ENCODE measurements at regions of chr16 and their contacts with region 1.

Region 1: GRCh38 chr16:69787883-69788282 is 25.8 kb downstream of the WWP2 start:
- DNase-seq: no peak
- ATAC-seq: no peak
- H3K4me3 ChIP-seq: no peak overlapping the region
- H3K27ac ChIP-seq: no peak overlapping the region
- H3K4me1 ChIP-seq: no peaks in the 10 kb centered on the region
- H3K27me3 ChIP-seq: no peaks in the 10 kb centered on the region
- CTCF ChIP-seq: no peak
- EP300 ChIP-seq: no peak
- POLR2A ChIP-seq: no peak
- RAD21 ChIP-seq: no peak

Region 2: GRCh38 chr16:69660166-69660565 is 127.7 kb before region 1 on chr16:
- CTCF ChIA-PET with region 1: no interaction called
- POLR2A ChIA-PET with region 1: no interaction called
- in situ Hi-C with region 1: no loop called
- intact Hi-C with region 1: no loop called
- DNase-seq: no peak
- ATAC-seq: no peak
- H3K4me3 ChIP-seq: no peak overlapping the region
- H3K27ac ChIP-seq: no peak overlapping the region
- H3K4me1 ChIP-seq: no peaks in the 10 kb centered on the region
- H3K27me3 ChIP-seq: no peaks in the 10 kb centered on the region
- CTCF ChIP-seq: no peak
- EP300 ChIP-seq: no peak
- POLR2A ChIP-seq: no peak
- RAD21 ChIP-seq: no peak

Region 3: DNA sequence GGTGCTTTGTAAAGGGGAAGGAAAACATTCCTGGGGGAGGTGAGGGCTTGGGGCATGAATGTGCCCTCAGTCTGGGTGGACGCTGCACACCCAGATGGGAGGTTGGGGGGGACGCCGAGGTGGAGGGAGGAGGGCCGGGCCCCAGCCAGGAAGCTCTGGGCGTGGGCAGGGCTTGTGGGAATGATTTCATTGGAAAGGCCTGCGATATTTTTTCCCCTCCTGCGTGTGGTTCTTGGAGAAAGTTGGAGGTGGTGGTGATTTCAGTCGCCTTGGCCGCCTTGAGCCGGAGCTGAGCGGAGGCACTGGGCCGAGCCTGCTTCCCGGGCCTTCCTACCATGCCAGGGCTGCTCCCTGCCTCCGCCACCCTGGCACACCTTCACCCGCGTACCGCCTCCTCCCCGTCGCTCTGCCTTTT is 136.9 kb after region 1 on chr16:
- CTCF ChIA-PET with region 1: no interaction called
- POLR2A ChIA-PET with region 1: no interaction called
- in situ Hi-C with region 1: loop called (anchors 5 kb)
- intact Hi-C with region 1: no loop called
- DNase-seq: no peak
- ATAC-seq: no peak
- H3K4me3 ChIP-seq: no peak overlapping the region
- H3K27ac ChIP-seq: no peak overlapping the region
- H3K4me1 ChIP-seq: 0 out of 5 replicates have a peak, but pooled peaks cover 0 to 3% of the 10 kb centered on the region in 2 experiments
- H3K27me3 ChIP-seq: no peaks in the 10 kb centered on the region
- CTCF ChIP-seq: no peak
- EP300 ChIP-seq: no peak
- POLR2A ChIP-seq: no peak
- RAD21 ChIP-seq: no peak